IMR-90 (cell line): ENCODE measurements at regions of chrX and their contacts with region 1.

Region 1: GRCh38 chrX:20530406-20530921 is 263.8 kb upstream of the RPS6KA3 start:
- DNase-seq: peak; percentile 64
- ATAC-seq: peak; percentile 79
- H3K4me3 ChIP-seq: peak overlapping the region; percentile 19; the same call in 1 of the 2 replicates
- H3K27ac ChIP-seq: no peak overlapping the region
- H3K4me1 ChIP-seq: peaks cover 4% of the 10 kb centered on the region; the same call in 1 of the 2 replicates
- H3K27me3 ChIP-seq: peaks cover 7% of the 10 kb centered on the region
- CTCF ChIP-seq: peak; percentile 72
- POLR2A ChIP-seq: no peak
- RAD21 ChIP-seq: peak; percentile 72

Region 2: DNA sequence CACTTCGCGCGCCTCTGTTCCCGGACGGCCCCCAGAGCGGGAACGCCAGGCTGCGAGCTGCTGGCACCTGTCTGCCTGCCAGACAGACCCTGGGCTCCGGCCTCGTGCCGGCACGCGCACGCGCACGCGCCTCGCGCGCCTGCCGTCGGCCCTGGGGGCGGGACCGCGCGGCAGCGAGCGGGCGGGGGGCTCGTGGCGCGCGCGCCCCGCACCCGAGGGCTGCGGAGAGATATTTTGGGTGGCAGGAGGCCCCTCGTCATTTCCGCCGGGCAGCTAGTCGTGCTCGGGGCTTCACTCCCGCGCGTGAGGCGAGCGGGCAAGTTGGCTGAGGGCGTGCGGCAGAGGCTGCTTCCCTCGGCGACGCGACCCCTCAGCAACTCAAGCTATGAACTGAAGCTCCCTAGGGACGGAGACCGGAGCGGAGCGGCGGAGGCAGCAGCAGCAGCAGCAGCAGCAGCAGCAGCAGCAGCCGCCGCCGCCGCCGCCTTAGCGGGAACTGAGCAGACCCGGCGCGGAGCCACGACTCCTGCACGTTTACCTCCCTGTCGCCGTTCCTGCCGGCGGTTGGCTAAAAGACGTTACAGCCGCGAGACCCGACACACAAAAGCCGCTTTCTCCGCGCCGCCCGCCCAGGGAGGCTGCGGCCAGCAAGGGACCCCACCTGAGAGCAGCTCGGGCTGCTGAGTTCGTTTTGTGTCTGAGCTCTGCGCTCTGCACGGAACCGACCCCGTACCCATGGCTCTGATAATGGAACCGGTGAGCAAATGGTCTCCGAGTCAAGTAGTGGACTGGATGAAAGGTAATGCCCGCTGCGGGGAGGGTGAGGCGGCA is 843.9 kb after region 1 on chrX and contains the start of gene CNKSR2:
- CTCF ChIA-PET with region 1: no interaction called
- POLR2A ChIA-PET with region 1: no interaction called
- dilution Hi-C with region 1: no loop called
- in situ Hi-C with region 1: no loop called
- intact Hi-C with region 1: loop called (anchors 10 kb)
- DNase-seq: peak; percentile 3
- ATAC-seq: peak; percentile 56
- H3K4me3 ChIP-seq: peak within 1 kb of the TSS; percentile 60
- H3K27ac ChIP-seq: no peak within 1 kb of the TSS
- H3K4me1 ChIP-seq: no peaks in the 10 kb centered on the region
- H3K27me3 ChIP-seq: peaks cover 18% of the 10 kb centered on the region
- CTCF ChIP-seq: no peak
- POLR2A ChIP-seq: no peak
- RAD21 ChIP-seq: no peak
- total RNA-seq, gene CNKSR2: 0.56 and 0.90 TPM in 2 replicates

Region 3: GRCh38 chrX:21725496-21725895 is 1195.0 kb after region 1 on chrX:
- CTCF ChIA-PET with region 1: interaction called, 6 read pairs
- POLR2A ChIA-PET with region 1: no interaction called
- dilution Hi-C with region 1: no loop called
- in situ Hi-C with region 1: loop called (anchors 10 kb)
- intact Hi-C with region 1: loop called (anchors 1 kb)
- DNase-seq: peak; percentile 60
- ATAC-seq: no peak
- H3K4me3 ChIP-seq: no peak overlapping the region
- H3K27ac ChIP-seq: no peak overlapping the region
- H3K4me1 ChIP-seq: no peaks in the 10 kb centered on the region
- H3K27me3 ChIP-seq: no peaks in the 10 kb centered on the region; the same call in 1 of the 2 replicates
- CTCF ChIP-seq: peak; percentile 56
- POLR2A ChIP-seq: no peak
- RAD21 ChIP-seq: peak; percentile 67

Region 4: DNA sequence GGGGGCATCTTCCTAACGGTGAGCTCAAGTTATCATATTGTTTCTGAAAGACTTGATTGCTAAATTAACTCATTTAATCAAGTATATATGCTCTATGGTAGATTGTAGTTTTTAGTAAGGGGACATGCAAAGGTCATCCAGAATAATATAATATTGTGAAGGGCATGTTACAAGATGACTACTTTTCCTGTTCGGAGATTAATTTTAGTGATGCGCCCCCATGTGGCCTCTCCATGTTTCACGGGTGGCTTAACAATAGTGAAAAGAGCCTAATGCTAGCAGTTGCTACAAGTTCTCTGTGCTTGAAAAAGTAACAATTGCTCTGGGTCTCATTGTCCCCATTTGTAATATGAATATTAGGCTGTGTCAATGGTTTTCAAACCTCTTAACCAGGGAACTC is 1215.3 kb after region 1 on chrX:
- CTCF ChIA-PET with region 1: no interaction called
- POLR2A ChIA-PET with region 1: no interaction called
- dilution Hi-C with region 1: no loop called
- in situ Hi-C with region 1: no loop called
- intact Hi-C with region 1: loop called (anchors 2 kb)
- DNase-seq: peak; percentile 25
- ATAC-seq: peak; percentile 57
- H3K4me3 ChIP-seq: no peak overlapping the region
- H3K27ac ChIP-seq: no peak overlapping the region
- H3K4me1 ChIP-seq: no peaks in the 10 kb centered on the region
- H3K27me3 ChIP-seq: peaks cover 6% of the 10 kb centered on the region; the same call in 1 of the 2 replicates
- CTCF ChIP-seq: peak; percentile 49
- POLR2A ChIP-seq: no peak
- RAD21 ChIP-seq: peak; percentile 48

Region 5: GRCh38 chrX:21972721-21973120 is 1442.3 kb after region 1 on chrX:
- CTCF ChIA-PET with region 1: no interaction called
- POLR2A ChIA-PET with region 1: no interaction called
- dilution Hi-C with region 1: no loop called
- in situ Hi-C with region 1: loop called (anchors 10 kb)
- intact Hi-C with region 1: loop called (anchors 2 kb)
- DNase-seq: peak; percentile 83
- ATAC-seq: peak; percentile 72
- H3K4me3 ChIP-seq: no peak overlapping the region
- H3K27ac ChIP-seq: peak overlapping the region; percentile 17; the same call in 1 of the 2 replicates
- H3K4me1 ChIP-seq: peaks cover 5% of the 10 kb centered on the region; the same call in 1 of the 2 replicates
- H3K27me3 ChIP-seq: 0 out of 2 replicates have a peak, but pooled peaks cover 2% of the 10 kb centered on the region
- CTCF ChIP-seq: peak; percentile 13; the same call in 1 of the 2 replicates
- POLR2A ChIP-seq: no peak
- RAD21 ChIP-seq: no peak